Stomach (tissue), 19 donors: ENCODE measurements at regions of chr3 and their contacts with region 1.

Region 1: GRCh38 chr3:188978421-188979171 is 193.2 kb upstream of the TPRG1 start:
- DNase-seq: peak in 1 of 2 donors; percentile 67
- H3K4me3 ChIP-seq: no peak overlapping the region
- H3K27ac ChIP-seq: peak overlapping the region in 4 of 5 donors; percentile 24 to 52 (median 45)
- H3K4me1 ChIP-seq: peaks cover 0 to 25% (median 8%) of the 10 kb centered on the region in 4 donors
- H3K27me3 ChIP-seq: no peaks in the 10 kb centered on the region
- CTCF ChIP-seq: no peak
- EP300 ChIP-seq: no peak
- POLR2A ChIP-seq: no peak

Region 2: DNA sequence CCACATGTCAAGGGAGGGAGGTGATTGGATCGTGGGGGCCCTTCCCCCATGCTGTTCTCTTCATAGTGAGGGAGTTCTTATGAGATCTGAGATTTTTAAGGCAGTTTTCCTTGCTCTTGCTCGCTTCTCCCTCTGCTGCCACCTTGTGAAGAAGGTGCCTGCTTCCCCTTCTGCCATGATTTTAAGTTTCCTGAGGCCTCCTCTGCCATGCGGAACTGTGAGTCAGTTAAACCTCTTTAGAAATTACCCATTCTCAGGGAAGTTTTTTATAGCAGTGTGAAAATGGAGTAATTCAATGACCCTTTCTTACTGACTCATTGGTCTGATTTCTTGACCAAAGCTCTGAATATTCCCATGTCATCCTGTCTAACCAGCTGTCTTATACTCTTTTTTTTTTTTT is 291.2 kb before region 1 on chr3:
- intact Hi-C with region 1: no loop called
- DNase-seq: no peak
- H3K4me3 ChIP-seq: no peak overlapping the region
- H3K27ac ChIP-seq: peak overlapping the region in 2 of 5 donors; percentile 11 to 61
- H3K4me1 ChIP-seq: peaks cover 5 to 77% (median 32%) of the 10 kb centered on the region in 4 donors
- H3K27me3 ChIP-seq: no peaks in the 10 kb centered on the region
- CTCF ChIP-seq: no peak
- EP300 ChIP-seq: no peak
- POLR2A ChIP-seq: no peak

Region 3: GRCh38 chr3:189049438-189050236 is 71.0 kb after region 1 on chr3:
- intact Hi-C with region 1: no loop called
- DNase-seq: no peak
- H3K4me3 ChIP-seq: no peak overlapping the region
- H3K27ac ChIP-seq: no peak overlapping the region
- H3K4me1 ChIP-seq: no peaks in the 10 kb centered on the region
- H3K27me3 ChIP-seq: no peaks in the 10 kb centered on the region
- CTCF ChIP-seq: no peak
- EP300 ChIP-seq: no peak
- POLR2A ChIP-seq: no peak

Region 4: GRCh38 chr3:189148081-189148507 is 169.5 kb after region 1 on chr3:
- intact Hi-C with region 1: loop called (anchors 10 kb)
- DNase-seq: peak; percentile 68 to 87
- H3K4me3 ChIP-seq: no peak overlapping the region
- H3K27ac ChIP-seq: no peak overlapping the region
- H3K4me1 ChIP-seq: peaks cover 0 to 16% (median 2%) of the 10 kb centered on the region in 4 donors
- H3K27me3 ChIP-seq: no peaks in the 10 kb centered on the region
- CTCF ChIP-seq: peak in 5 of 7 experiments; percentile 63 to 82 (median 76)
- EP300 ChIP-seq: no peak
- POLR2A ChIP-seq: no peak